Activated CD4-positive, alpha-beta memory T cell treated with anti-CD3 and anti-CD28 coated beads for 36 hours (primary cell): ENCODE measurements at regions of chr1 and their contacts with region 1.

Region 1: GRCh38 chr1:7783826-7784491 is at the start of gene PER3:
- DNase-seq: peak; percentile 91
- H3K4me3 Mint-ChIP-seq: peak within 1 kb of the TSS; percentile 65
- H3K27ac Mint-ChIP-seq: no peak within 1 kb of the TSS
- H3K4me1 Mint-ChIP-seq: peaks cover 19% of the 10 kb centered on the region
- H3K27me3 Mint-ChIP-seq: no peaks in the 10 kb centered on the region
- total RNA-seq, gene PER3: 2.3 to 2.9 TPM

Region 2: GRCh38 chr1:7770997-7771822 is 12.7 kb before region 1 on chr1 and contains the start of gene VAMP3:
- CTCF ChIA-PET with region 1: no interaction called
- POLR2A ChIA-PET with region 1: interaction called, 3 read pairs
- intact Hi-C with region 1: loop called (anchors 1 kb)
- DNase-seq: peak; percentile 92
- H3K4me3 Mint-ChIP-seq: peak within 1 kb of the TSS; percentile 82
- H3K27ac Mint-ChIP-seq: peak within 1 kb of the TSS; percentile 67
- H3K4me1 Mint-ChIP-seq: peaks cover 41% of the 10 kb centered on the region
- H3K27me3 Mint-ChIP-seq: peaks cover 5% of the 10 kb centered on the region
- total RNA-seq, gene VAMP3: 19.9 to 21.8 TPM

Region 3: DNA sequence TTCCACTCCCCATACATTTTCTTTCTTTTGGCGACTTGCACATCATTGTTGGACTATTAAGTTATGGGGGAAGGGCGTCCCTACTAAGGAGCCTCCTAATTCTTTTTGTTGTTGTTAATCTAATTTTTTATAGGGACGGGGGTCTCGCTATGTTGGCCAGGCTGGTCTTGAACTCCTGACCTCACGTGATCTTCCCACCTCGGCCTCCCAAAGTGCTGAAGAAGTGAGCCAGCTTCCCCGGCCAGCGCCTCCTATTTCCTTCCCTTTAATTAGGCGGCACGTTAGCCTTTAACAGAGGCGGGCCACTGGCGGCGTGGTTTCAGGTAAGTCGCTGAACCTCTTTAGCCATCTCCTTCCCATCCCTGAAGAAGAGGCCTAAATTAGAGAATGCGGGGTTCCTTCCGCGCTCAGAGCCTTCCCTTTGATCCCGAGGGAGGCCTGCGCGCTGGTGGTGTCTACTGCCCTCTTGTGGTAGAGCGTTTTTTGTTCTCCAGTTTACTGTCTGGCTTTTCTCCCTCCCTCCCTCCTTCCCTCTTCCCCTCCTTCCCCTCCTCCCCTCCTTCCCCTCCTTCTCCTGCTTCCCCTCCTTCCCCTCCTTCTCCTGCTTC is 118.6 kb after region 1 on chr1:
- CTCF ChIA-PET with region 1: no interaction called
- POLR2A ChIA-PET with region 1: no interaction called
- intact Hi-C with region 1: loop called (anchors 10 kb)
- DNase-seq: peak; percentile 72
- H3K4me3 Mint-ChIP-seq: peak overlapping the region; percentile 37
- H3K27ac Mint-ChIP-seq: no peak overlapping the region
- H3K4me1 Mint-ChIP-seq: peaks cover 10% of the 10 kb centered on the region
- H3K27me3 Mint-ChIP-seq: no peaks in the 10 kb centered on the region